ENCODE measurements at regions of chr16 and their contacts with region 1.

Region 1: GRCh38 chr16:75402821-75403475 is 30.4 kb downstream of the CFDP1 start:
- DNase-seq: no peak
- H3K4me3 ChIP-seq: no peak overlapping the region
- H3K27ac ChIP-seq: no peak overlapping the region
- H3K27me3 ChIP-seq: no peaks in the 10 kb centered on the region
- CTCF ChIP-seq: peak; percentile 61

Region 2: DNA sequence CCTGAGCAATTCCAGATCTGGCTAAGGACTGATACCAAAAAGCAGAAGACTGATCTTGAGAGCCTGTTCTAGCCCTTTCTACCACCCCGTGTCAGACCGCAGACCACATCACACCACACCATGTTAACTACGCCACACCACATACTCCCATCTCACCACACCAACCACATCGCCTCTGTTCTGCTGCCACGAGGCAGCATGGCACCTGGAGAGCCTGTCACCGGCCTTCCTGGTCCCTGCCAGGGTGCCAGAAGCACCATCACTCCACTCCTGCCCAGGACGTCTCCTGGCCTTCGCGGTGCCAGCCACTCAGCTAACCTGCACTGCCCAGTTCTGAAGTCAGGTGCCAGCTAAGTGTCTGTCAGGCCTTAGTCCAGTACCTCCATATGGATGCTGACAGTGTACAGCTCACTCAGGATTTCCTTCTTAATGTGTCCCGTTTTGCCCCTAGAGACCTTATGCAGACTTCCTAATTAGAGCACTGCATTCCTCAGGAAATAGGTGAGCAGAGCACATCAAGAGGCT is 114.3 kb before region 1 on chr16:
- CTCF ChIA-PET with region 1: no interaction called
- POLR2A ChIA-PET with region 1: no interaction called
- DNase-seq: no peak
- H3K4me3 ChIP-seq: no peak overlapping the region
- H3K27ac ChIP-seq: no peak overlapping the region
- H3K27me3 ChIP-seq: no peaks in the 10 kb centered on the region
- CTCF ChIP-seq: no peak

Region 3: GRCh38 chr16:75392911-75393310 is 10.0 kb before region 1 on chr16:
- CTCF ChIA-PET with region 1: interaction called, 49 read pairs
- POLR2A ChIA-PET with region 1: no interaction called
- DNase-seq: no peak
- H3K4me3 ChIP-seq: no peak overlapping the region
- H3K27ac ChIP-seq: no peak overlapping the region
- H3K27me3 ChIP-seq: no peaks in the 10 kb centered on the region
- CTCF ChIP-seq: no peak